Activated CD4-positive, alpha-beta T cell treated with anti-CD3 and anti-CD28 coated beads for 36 hours (primary cell): ENCODE measurements at regions of chr20 and their contacts with region 1.

Region 1: DNA sequence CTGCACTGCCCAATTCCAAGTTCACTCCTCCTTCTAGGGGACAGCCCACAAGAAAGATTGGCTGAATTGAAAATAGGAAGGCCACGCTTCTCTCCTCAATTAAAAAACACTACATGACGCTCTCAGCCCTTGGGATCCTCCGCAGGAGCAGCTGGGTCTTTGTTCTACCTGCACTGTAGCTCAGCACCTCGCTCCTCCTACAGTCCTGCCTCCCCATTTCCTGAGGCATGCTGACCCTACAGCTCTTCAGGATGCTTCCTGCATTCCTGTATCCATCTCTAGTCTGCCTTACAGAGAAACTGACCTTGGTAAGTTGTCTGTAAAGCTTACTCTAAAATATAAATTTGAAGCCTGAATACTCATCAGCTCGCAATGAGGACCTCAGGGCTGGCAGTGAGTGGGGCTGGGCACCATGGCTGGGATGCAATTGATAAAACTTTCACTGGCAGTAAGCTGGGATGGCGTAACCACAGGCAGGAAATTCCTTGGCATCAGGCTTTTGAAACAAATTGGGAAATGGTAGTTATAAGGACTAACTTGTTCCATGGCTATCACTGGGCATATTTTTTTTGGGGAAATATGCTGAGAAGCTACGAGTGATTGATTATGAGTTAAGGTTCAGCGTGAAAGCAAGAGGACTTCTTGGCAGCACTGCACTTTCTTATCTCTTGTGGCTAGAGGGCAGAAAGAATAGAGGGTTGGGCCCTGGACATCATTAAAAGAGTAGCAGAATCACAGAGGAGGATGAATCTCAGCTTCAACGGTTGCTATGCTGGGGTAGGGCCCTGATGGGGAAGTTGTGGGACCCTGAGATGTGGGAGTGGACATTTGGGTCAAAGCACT is 11.7 kb upstream of the SIRPB1 start:
- DNase-seq: no peak
- ATAC-seq: no peak
- H3K4me3 Mint-ChIP-seq: peak overlapping the region; percentile 15
- H3K27ac Mint-ChIP-seq: peak overlapping the region; percentile 74
- H3K4me1 Mint-ChIP-seq: peaks cover 60% of the 10 kb centered on the region
- H3K27me3 Mint-ChIP-seq: no peaks in the 10 kb centered on the region

Region 2: DNA sequence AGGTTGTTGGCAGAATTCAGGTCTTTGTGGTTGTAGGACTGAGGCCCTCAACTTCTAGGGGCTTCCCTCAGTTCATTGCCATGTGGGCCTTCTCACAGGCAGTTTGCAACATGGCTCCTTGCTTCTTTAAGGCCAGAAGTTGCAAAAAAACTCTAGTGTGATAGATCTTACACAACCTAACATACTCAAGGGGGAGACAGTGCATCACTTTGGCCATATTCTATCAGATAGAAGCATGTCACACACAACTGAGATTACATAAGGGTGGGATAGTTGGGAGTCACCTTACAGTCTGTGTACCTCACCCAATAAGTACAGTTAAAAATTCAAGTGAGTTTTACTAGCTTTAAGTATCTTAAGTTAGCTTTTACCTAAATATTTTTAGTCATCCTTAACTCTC is 75.6 kb before region 1 on chr20:
- CTCF ChIA-PET with region 1: interaction called, 4 read pairs
- POLR2A ChIA-PET with region 1: no interaction called
- intact Hi-C with region 1: loop called in 1 of 2 experiments (anchors 5 kb)
- DNase-seq: no peak
- ATAC-seq: no peak
- H3K4me3 Mint-ChIP-seq: no peak overlapping the region
- H3K27ac Mint-ChIP-seq: no peak overlapping the region
- H3K4me1 Mint-ChIP-seq: peaks cover 3% of the 10 kb centered on the region
- H3K27me3 Mint-ChIP-seq: no peaks in the 10 kb centered on the region

Region 3: GRCh38 chr20:1651268-1652058 is 19.9 kb after region 1 on chr20:
- CTCF ChIA-PET with region 1: no interaction called
- POLR2A ChIA-PET with region 1: no interaction called
- intact Hi-C with region 1: loop called in 1 of 2 experiments (anchors 2 kb)
- DNase-seq: no peak
- ATAC-seq: no peak
- H3K4me3 Mint-ChIP-seq: no peak overlapping the region
- H3K27ac Mint-ChIP-seq: peak overlapping the region; percentile 67
- H3K4me1 Mint-ChIP-seq: peaks cover 86% of the 10 kb centered on the region
- H3K27me3 Mint-ChIP-seq: no peaks in the 10 kb centered on the region